Naive thymus-derived CD8-positive, alpha-beta T cell (primary cell): ENCODE measurements at regions of chr16 and their contacts with region 1.

Region 1: GRCh38 chr16:89785523-89786155 is 30.8 kb downstream of the FANCA start:
- DNase-seq: peak in 8 of 10 donors; percentile 31 to 80 (median 68)
- ATAC-seq: peak; percentile 88 to 92
- H3K4me3 Mint-ChIP-seq: peak overlapping the region; percentile 36 to 84 (median 61)
- H3K27ac Mint-ChIP-seq: peak overlapping the region in 9 of 10 donors; percentile 47 to 94 (median 82)
- H3K4me1 Mint-ChIP-seq: peaks cover 18 to 36% (median 33%) of the 10 kb centered on the region in 4 donors
- H3K27me3 Mint-ChIP-seq: no peaks in the 10 kb centered on the region

Region 2: GRCh38 chr16:89737341-89738071 is 48.1 kb before region 1 on chr16:
- POLR2A ChIA-PET with region 1: interaction called, 18 read pairs
- DNase-seq: peak in 8 of 10 donors; percentile 37 to 79 (median 58)
- ATAC-seq: peak; percentile 72 to 88
- H3K4me3 Mint-ChIP-seq: peak overlapping the region; percentile 26 to 83 (median 54)
- H3K27ac Mint-ChIP-seq: peak overlapping the region; percentile 60 to 92 (median 82)
- H3K4me1 Mint-ChIP-seq: peaks cover 17 to 75% (median 33%) of the 10 kb centered on the region in 4 donors
- H3K27me3 Mint-ChIP-seq: no peaks in the 10 kb centered on the region

Region 3: DNA sequence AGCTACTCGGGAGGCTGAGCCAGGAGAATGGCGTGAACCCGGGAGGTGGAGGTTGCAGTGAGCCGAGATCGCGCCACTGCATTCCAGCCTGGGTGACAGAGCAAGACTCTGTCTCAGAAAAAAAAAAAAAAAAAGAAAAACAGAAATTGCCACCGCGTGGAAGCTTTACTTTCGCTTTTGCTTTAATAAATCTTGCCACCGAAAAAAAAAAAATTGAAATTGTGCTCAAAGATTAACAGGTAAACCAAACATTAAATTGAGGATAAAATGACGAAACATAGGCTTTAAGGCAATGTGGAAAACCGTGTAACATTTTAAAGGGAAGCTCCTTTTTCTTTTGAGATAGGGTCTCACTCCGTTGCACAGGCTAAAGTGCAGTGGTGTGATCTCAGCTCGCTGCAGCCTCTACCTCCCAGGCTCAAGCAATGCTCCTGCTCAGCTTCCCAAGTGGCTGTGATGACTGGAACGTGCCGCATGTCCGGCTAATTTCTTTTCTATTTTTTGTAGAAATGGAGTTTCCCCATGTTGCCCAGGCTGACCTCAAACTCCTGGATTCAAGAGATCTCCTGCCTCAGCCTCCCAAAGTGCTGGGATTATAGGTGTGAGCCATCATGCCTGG is 24.2 kb before region 1 on chr16:
- POLR2A ChIA-PET with region 1: interaction called, 27 read pairs
- DNase-seq: peak in 3 of 10 donors; percentile 42 to 54 (median 50)
- ATAC-seq: peak; percentile 59 to 77
- H3K4me3 Mint-ChIP-seq: peak overlapping the region; percentile 79 to 93 (median 87)
- H3K27ac Mint-ChIP-seq: peak overlapping the region; percentile 84 to 95 (median 90)
- H3K4me1 Mint-ChIP-seq: peaks cover 10 to 54% (median 38%) of the 10 kb centered on the region in 4 donors
- H3K27me3 Mint-ChIP-seq: no peaks in the 10 kb centered on the region

Region 4: GRCh38 chr16:89798832-89799370 is 13.3 kb after region 1 on chr16:
- POLR2A ChIA-PET with region 1: interaction called, 10 read pairs
- DNase-seq: no peak
- ATAC-seq: no peak
- H3K4me3 Mint-ChIP-seq: no peak overlapping the region
- H3K27ac Mint-ChIP-seq: no peak overlapping the region
- H3K4me1 Mint-ChIP-seq: no peaks in the 10 kb centered on the region
- H3K27me3 Mint-ChIP-seq: no peaks in the 10 kb centered on the region